ENCODE measurements at regions of chr3 and their contacts with region 1.

Region 1: GRCh38 chr3:153221748-153222162 is 59.7 kb downstream of the RAP2B start:
- DNase-seq: peak; percentile 73
- H3K4me3 Mint-ChIP-seq: peak overlapping the region; percentile 66
- H3K27ac Mint-ChIP-seq: peak overlapping the region; percentile 85
- H3K4me1 Mint-ChIP-seq: peaks cover 53% of the 10 kb centered on the region
- H3K27me3 Mint-ChIP-seq: no peaks in the 10 kb centered on the region

Region 2: DNA sequence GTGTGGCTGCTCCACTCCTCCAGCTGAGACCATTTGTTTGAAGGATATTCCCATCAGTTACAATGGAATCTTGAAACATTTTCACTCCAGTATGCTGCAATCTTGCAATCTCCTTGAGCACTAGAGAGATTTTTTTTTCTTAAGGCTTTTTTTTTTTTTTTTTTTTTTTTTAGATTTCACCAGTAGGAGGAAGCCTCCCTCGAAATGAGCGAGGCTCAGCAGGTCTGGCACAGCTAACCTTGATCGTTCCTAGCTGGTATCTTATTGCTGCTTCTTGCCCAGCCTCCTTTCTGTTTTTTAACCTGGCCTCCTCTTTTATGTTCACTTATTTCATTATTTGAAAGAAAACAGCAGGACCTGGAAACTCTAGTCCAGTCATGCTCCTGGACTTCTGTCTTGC is 11.6 kb before region 1 on chr3:
- CTCF ChIA-PET with region 1: interaction called, 5 read pairs
- intact Hi-C with region 1: loop called (anchors 1 kb)
- DNase-seq: peak; percentile 16
- H3K4me3 Mint-ChIP-seq: peak overlapping the region; percentile 36
- H3K27ac Mint-ChIP-seq: no peak overlapping the region
- H3K4me1 Mint-ChIP-seq: peaks cover 33% of the 10 kb centered on the region
- H3K27me3 Mint-ChIP-seq: no peaks in the 10 kb centered on the region

Region 3: DNA sequence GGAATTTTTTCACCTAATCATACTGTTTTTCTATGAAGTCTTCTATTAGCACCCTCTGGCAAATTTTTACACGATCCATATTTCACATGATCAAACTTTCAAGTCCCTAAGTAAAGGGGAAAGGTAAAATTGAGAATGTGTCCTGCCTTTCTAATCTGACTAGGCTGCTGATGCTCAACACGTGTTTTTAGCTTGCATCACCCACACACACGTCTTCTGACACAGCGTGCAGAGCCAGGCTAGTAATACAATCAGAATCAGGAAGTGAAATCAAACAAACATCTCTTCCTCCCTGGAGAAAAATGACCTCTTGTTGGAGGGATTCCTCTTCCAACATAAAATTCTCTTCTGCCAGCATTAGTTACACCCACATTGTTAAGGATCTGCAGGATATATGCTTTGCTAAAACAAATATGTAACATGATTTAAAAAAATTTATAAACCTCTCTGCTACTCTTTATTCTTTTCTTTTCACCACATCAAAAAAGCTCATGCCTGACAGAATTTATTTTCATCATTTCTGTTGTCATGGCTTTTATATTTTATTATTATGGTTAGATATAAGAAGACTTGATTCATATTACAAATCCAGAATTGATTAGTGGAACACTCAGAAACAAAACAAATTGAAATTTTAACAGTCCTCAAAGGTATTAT is 62.7 kb after region 1 on chr3:
- CTCF ChIA-PET with region 1: no interaction called
- intact Hi-C with region 1: loop called (anchors 2 kb)
- DNase-seq: peak; percentile 72
- H3K4me3 Mint-ChIP-seq: no peak overlapping the region
- H3K27ac Mint-ChIP-seq: peak overlapping the region; percentile 68
- H3K4me1 Mint-ChIP-seq: peaks cover 40% of the 10 kb centered on the region
- H3K27me3 Mint-ChIP-seq: no peaks in the 10 kb centered on the region